Activated CD4-positive, alpha-beta memory T cell treated with anti-CD3 and anti-CD28 coated beads, Interleukin-2, amount 10 ng/mL, durations not matched to agents 7 days and 5 days (primary cell): ENCODE measurements at regions of chr2 and their contacts with region 1.

Region 1: GRCh38 chr2:69436938-69437750 is at the start of gene NFU1:
- DNase-seq: peak; percentile 88
- H3K4me3 Mint-ChIP-seq: peak within 1 kb of the TSS; percentile 94
- H3K27ac Mint-ChIP-seq: peak within 1 kb of the TSS; percentile 96
- H3K4me1 Mint-ChIP-seq: peaks cover 31% of the 10 kb centered on the region
- H3K27me3 Mint-ChIP-seq: no peaks in the 10 kb centered on the region
- total RNA-seq, gene NFU1: 24.4 to 30.7 TPM

Region 2: GRCh38 chr2:68943581-68944568 is 493.3 kb before region 1 on chr2:
- CTCF ChIA-PET with region 1: no interaction called
- POLR2A ChIA-PET with region 1: no interaction called
- DNase-seq: peak; percentile 50
- H3K4me3 Mint-ChIP-seq: no peak overlapping the region
- H3K27ac Mint-ChIP-seq: no peak overlapping the region
- H3K4me1 Mint-ChIP-seq: peaks cover 4% of the 10 kb centered on the region
- H3K27me3 Mint-ChIP-seq: peaks cover 64% of the 10 kb centered on the region

Region 3: DNA sequence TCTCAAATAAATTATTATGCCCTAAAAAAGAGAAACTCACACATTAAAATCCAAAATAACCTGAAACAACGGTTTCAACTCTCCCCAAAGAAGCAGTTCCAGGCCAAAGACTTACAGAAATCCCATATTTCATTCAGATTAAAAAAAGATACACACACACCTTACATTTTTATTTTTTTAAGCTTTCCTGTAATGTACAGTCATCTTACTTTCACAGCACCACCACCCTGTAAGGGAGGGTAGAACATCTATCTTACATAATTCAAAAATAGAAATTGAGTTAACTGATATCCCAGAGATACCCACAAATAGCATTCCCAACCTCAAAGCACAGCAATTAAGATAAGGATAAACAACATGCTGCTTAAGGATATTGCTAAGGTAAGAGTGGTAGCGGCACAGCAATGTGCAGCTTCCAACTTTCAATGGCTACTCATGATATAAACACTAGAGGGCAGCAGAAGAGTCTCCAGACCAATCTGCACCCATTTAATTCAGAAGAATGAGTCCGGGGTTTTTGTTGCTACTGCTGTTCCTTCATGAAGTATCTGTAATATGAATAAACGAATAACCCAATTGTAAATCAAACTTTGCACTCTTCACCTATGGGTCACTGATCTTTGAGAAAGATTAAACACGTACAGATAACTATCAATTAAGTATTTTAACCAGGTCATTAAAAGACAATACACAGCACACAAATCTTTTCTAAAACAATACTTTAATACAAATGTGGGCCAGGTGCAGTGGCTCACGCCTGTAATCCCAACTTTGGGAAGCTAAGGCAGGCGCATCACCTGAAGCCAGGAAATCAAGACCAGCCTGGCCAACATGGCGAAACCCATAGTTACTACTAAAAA is 61.4 kb before region 1 on chr2:
- CTCF ChIA-PET with region 1: interaction called, 38 read pairs
- POLR2A ChIA-PET with region 1: interaction called, 6 read pairs
- DNase-seq: no peak
- H3K4me3 Mint-ChIP-seq: no peak overlapping the region
- H3K27ac Mint-ChIP-seq: no peak overlapping the region
- H3K4me1 Mint-ChIP-seq: peaks cover 13% of the 10 kb centered on the region
- H3K27me3 Mint-ChIP-seq: no peaks in the 10 kb centered on the region

Region 4: DNA sequence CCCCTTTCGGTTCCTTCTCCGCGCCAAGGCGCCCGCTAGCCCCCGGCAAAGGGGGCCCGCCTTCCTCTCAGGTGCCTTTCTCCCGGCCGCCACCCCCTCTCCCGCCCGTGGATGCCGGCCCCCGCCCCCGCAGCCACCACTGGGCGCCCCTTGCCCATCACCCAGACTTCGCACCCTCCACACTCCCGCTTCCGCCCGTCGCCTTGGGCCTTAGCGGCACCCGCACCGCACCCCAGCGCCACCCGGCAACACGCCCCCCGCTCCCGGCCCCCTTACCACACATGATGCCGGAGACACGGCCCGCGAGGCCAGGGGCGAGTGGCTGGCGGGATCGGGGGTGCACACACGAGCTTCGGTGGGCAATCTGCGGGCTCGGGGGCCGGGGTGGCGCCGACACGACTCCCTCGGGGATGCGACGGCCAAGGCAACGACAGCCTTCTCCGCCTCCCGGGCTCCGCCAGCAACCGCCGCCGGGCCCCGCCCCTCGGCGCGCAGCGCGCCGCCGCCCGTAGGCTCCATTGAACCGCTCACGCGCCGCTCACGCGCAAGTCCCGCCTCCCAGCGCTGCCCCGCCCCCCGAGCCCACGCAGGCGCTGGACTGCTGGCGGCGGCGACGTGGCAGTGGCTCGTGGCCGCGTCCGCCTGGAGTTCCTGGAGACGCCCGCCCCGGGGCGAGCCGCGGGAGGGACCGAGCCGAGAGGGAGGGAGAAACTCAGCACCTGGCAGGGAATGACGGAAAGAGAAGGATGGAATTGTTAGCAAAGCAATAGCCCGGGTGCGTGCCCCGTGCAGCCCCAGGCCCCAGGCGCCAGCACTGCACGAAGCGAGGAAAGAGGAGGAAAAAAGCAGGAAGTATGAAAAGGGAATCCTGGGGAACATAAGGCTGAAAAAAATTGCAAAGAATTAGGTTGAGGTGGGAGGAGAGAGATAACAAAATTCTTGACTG is 50.1 kb before region 1 on chr2 and contains the start of gene GFPT1:
- CTCF ChIA-PET with region 1: interaction called, 7 read pairs
- POLR2A ChIA-PET with region 1: interaction called, 33 read pairs
- DNase-seq: peak; percentile 93
- H3K4me3 Mint-ChIP-seq: peak within 1 kb of the TSS; percentile 80
- H3K27ac Mint-ChIP-seq: peak within 1 kb of the TSS; percentile 69
- H3K4me1 Mint-ChIP-seq: peaks cover 43% of the 10 kb centered on the region
- H3K27me3 Mint-ChIP-seq: no peaks in the 10 kb centered on the region
- total RNA-seq, gene GFPT1: 27.4 to 29.6 TPM